Activated T-helper 1 cell treated with anti-CD3 and anti-CD28 coated beads, Interleukin-12 subunit alpha, Interleukin-12 subunit beta, Interleukin-2, Interleukin-4 antibody, amounts not matched to agents 30 ng/mL and 10 ng/mL and 1 ng/mL, durations not matched to agents 14 hours and 24 hours and 36 hours (primary cell): ENCODE measurements at regions of chr14 and their contacts with region 1.

Region 1: DNA sequence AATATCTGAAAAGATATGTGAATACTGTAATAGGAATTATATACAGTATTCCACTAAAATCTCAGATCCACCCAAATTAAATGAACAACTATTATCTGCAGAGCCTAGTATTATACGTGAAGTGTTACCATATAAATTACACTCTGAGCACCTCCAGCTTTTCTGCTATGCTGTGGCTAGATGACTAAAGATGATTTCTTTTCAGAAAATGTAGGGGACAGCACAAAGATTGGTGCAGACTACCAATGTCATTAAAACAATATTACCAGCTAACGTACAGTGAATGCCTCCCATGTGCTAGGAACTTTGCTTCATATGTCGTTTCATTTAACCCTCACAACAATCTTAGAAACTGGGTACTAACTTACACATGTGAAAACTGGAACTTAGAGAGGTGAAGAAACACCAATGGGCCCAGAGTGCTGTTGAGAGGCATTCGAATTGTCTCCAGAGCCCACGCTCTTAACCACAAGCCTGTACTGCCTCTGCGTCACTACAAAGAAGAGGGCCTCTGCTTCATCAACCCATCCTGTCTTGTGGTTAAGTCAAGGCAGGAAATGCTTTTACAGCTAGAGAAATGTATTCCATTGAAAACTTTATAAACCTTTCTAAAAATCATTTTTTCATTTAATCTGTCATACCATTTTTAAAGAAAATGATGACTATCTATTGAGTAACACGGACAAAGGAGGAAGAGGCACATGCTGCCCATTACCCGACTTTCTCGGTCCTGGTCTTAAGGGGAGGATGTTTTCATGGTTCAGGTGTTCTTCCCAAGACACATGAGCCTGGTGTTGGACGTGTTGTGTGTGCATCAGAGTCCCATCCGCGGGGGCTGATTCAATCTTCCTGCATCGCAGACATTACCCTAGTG is 1.3 kb downstream of the GPR65 start:
- DNase-seq: peak; percentile 68
- H3K4me3 Mint-ChIP-seq: peak overlapping the region; percentile 93
- H3K27ac Mint-ChIP-seq: peak overlapping the region; percentile 94
- H3K4me1 Mint-ChIP-seq: peaks cover 70% of the 10 kb centered on the region
- H3K27me3 Mint-ChIP-seq: no peaks in the 10 kb centered on the region

Region 2: DNA sequence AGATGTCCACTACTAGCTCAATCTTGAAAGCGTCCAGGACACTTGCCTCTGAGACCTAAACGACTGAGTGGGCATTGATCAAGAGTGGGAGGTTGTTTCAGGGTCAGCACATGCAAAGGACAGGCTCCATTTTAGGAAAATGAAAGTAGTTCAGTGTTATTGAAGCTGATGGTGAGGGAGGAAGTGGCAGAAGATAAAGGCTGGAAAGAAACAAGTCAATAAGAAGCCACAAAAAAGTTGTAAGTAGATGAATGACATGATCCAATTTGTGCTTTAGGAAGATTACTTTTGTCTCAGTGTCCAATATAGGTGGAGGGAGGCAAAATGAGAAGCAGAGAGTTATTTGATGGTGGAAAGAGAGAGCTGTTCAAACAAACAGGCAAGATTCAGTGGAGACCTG is 20.7 kb after region 1 on chr14:
- intact Hi-C with region 1: loop called (anchors 1 kb)
- DNase-seq: no peak
- H3K4me3 Mint-ChIP-seq: peak overlapping the region; percentile 53
- H3K27ac Mint-ChIP-seq: peak overlapping the region; percentile 85
- H3K4me1 Mint-ChIP-seq: peaks cover 82% of the 10 kb centered on the region
- H3K27me3 Mint-ChIP-seq: no peaks in the 10 kb centered on the region

Region 3: DNA sequence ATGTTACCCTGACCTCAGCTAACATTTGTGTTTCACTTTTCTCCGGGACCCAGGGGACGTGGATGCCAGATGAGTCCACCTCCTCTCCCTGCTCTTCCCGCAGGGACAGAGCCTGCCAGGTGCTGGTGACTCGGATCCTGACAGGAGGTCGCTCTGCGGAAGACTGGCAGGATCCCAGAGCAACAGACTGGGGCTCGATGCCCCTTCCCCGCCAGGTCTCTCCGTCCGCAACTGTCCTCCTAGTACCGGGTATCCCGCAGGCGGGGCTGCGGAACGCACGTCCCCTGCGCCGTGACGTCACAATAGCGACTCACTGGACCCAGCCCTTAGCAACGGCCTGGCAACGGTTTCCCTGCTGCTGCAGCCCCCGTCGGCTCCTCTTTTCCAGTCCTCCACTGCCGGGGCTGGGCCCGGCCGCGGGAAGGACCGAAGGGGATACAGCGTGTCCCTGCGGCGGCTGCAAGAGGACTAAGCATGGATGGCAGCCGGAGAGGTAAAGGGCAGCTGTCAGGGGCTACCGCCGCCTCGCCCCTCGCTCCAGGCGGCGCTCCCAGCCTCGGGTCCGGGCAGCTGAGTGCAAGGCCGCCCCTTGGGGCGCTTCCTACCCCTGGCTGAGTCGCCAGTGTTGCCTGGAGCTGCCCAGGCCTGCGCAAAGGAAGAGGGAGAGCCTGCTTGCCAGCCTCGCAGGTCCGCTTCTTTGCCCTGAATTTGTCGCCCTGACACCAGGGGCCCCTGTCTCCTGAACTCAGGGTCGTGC is 379.3 kb after region 1 on chr14 and contains the start of gene SPATA7:
- intact Hi-C with region 1: loop called (anchors 2 kb)
- DNase-seq: peak; percentile 80
- H3K4me3 Mint-ChIP-seq: peak within 1 kb of the TSS; percentile 96
- H3K27ac Mint-ChIP-seq: peak within 1 kb of the TSS; percentile 61
- H3K4me1 Mint-ChIP-seq: peaks cover 15% of the 10 kb centered on the region
- H3K27me3 Mint-ChIP-seq: peaks cover 7% of the 10 kb centered on the region
- total RNA-seq, gene SPATA7: 2.4 and 2.5 TPM in 2 replicates

Region 4: GRCh38 chr14:88792572-88793258 is 786.5 kb after region 1 on chr14 and contains the start of gene EML5:
- intact Hi-C with region 1: loop called (anchors 2 kb)
- DNase-seq: peak; percentile 75
- H3K4me3 Mint-ChIP-seq: peak within 1 kb of the TSS; percentile 82
- H3K27ac Mint-ChIP-seq: peak within 1 kb of the TSS; percentile 71
- H3K4me1 Mint-ChIP-seq: peaks cover 13% of the 10 kb centered on the region
- H3K27me3 Mint-ChIP-seq: peaks cover 31% of the 10 kb centered on the region
- total RNA-seq, gene EML5: 1.5 and 1.7 TPM in 2 replicates